ENCODE measurements at regions of chr18 and their contacts with region 1.

Region 1: GRCh38 chr18:63320046-63320689 is 599 bp upstream of the BCL2 start:
- DNase-seq: peak; percentile 93
- ATAC-seq: peak; percentile 81
- H3K4me3 Mint-ChIP-seq: peak overlapping the region; percentile 94
- H3K27ac Mint-ChIP-seq: peak overlapping the region; percentile 91
- H3K4me1 Mint-ChIP-seq: peaks cover 27% of the 10 kb centered on the region
- H3K27me3 Mint-ChIP-seq: no peaks in the 10 kb centered on the region

Region 2: GRCh38 chr18:62919109-62919838 is 400.9 kb before region 1 on chr18:
- CTCF ChIA-PET with region 1: no interaction called
- POLR2A ChIA-PET with region 1: no interaction called
- DNase-seq: no peak
- ATAC-seq: no peak
- H3K4me3 Mint-ChIP-seq: no peak overlapping the region
- H3K27ac Mint-ChIP-seq: no peak overlapping the region
- H3K4me1 Mint-ChIP-seq: no peaks in the 10 kb centered on the region
- H3K27me3 Mint-ChIP-seq: no peaks in the 10 kb centered on the region

Region 3: DNA sequence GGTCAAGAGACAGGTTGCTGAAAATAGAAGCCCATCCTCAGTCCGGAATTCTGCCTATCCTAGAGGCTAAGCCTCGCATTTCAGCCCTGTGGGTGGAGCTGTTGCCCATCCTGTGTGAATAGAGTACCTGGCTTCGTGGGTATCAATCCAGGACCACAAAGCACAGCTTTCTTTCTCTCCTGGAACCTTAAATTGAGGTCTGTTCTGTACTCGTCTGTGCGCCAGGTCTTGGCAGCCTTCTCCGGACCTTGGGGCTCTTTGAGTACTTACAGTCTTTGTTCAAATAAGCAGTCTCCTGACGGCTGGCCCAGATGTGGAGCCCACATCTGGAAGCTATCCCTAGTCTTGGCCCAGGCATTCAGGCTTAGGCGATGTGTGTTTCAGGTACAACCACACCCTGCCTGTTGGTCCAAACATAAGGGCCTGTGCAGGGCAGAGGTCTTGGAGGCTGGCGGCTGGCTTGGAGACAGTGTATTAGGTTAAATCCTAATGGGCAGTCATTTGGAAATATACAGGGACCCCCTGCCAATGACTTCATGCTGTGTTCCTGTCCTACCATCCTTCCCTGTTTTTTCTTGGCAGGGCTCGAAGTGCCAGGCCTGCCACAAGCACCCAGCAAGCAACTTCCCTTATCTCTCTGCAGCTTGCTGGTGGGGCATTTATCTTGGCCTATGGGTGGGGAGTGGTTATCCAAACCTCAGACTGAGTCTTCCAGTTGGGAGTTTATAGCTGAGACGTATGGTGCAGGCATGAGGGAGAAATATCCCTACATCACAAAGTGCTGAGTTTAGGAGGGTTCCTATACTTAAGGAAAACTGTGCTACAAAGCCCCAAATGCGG is 294.7 kb before region 1 on chr18:
- CTCF ChIA-PET with region 1: interaction called, 144 read pairs
- POLR2A ChIA-PET with region 1: no interaction called
- DNase-seq: no peak
- ATAC-seq: no peak
- H3K4me3 Mint-ChIP-seq: no peak overlapping the region
- H3K27ac Mint-ChIP-seq: no peak overlapping the region
- H3K4me1 Mint-ChIP-seq: no peaks in the 10 kb centered on the region
- H3K27me3 Mint-ChIP-seq: peaks cover 18% of the 10 kb centered on the region

Region 4: DNA sequence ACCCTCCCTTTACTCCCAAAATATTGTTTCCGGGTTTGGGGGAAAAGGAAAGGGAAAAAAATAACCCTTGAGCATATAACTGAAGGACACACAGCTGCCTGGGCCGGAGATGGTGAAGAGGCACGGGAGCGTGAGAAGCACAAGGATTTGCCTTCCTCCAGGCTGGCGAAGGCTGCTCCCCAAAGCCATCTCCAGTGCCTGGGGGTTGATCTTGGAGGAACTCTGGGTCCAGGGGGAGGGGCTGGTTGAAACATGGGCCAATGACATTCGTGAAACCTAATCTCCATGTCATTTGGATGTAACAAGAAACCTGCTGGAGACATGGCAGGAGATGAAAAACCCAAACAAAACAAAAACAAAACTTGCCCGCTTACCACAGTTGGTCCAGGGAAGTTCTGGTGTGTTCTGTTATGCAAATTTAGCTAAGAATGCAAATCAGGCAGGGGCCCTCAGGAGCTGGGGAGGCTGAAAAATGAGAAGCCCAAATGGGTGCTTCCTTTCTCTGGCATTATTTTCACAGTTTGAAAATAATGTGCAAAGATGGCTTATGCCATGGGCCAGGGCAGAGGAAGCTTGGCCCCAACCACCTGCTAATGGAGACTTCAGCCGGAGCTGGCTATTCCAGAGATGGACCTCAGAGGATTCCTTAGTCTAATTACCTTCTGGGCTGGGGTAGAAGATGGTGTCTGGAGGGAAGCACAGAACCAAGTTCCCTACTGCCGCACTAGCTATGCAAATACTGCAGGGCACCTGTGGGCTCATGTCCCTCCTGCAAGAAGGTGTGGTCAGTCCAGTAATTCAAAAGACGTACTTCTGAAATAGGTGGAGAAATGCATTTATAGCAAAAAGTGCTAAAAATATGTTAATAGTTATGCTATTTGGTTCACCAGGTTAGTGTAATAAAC is 181.5 kb before region 1 on chr18:
- CTCF ChIA-PET with region 1: interaction called, 25 read pairs
- POLR2A ChIA-PET with region 1: interaction called, 28 read pairs
- DNase-seq: no peak
- ATAC-seq: peak; percentile 54
- H3K4me3 Mint-ChIP-seq: peak overlapping the region; percentile 77
- H3K27ac Mint-ChIP-seq: peak overlapping the region; percentile 95
- H3K4me1 Mint-ChIP-seq: peaks cover 75% of the 10 kb centered on the region
- H3K27me3 Mint-ChIP-seq: no peaks in the 10 kb centered on the region

Region 5: GRCh38 chr18:63207143-63207790 is 112.9 kb before region 1 on chr18:
- CTCF ChIA-PET with region 1: interaction called, 54 read pairs
- POLR2A ChIA-PET with region 1: interaction called, 205 read pairs
- DNase-seq: peak; percentile 42
- ATAC-seq: peak; percentile 12
- H3K4me3 Mint-ChIP-seq: peak overlapping the region; percentile 82
- H3K27ac Mint-ChIP-seq: peak overlapping the region; percentile 88
- H3K4me1 Mint-ChIP-seq: peaks cover 90% of the 10 kb centered on the region
- H3K27me3 Mint-ChIP-seq: no peaks in the 10 kb centered on the region

Region 6: DNA sequence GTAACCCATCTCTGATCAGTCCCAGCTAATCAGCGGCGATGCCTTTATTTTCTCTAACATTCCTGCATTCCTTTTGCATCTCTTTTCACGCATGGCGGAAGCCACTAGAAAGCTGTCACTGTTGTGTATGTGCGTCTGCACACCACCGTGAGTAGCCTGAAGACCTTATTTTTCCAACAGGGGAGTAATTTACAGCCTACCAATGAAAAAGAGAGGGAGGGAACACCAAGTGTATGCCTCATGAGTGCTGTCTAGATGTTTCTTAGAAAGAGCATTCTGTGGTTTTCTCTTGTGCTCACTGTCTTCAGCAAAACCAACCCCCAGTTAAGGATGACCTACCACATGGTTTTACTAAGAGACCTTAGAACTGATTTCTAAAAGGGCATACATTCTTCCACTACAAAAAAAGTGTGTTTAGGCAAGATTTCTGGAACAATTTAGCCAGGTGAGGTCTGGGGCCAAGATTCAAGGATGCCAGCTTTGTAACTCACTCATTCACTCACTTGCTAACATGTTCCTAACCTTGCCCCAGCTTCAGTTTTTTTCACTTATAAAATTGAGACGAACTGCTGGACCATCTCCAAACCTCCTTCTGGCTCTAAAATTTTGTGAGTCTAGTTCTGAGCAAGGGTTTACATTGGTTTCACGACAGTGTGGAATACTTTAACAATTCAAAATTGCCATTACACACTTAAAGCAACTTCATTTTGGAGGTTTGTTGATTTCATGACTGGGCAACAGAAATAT is 52.0 kb before region 1 on chr18:
- CTCF ChIA-PET with region 1: interaction called, 43 read pairs
- POLR2A ChIA-PET with region 1: interaction called, 8 read pairs
- DNase-seq: peak; percentile 46
- ATAC-seq: peak; percentile 90
- H3K4me3 Mint-ChIP-seq: peak overlapping the region; percentile 60
- H3K27ac Mint-ChIP-seq: peak overlapping the region; percentile 64
- H3K4me1 Mint-ChIP-seq: peaks cover 79% of the 10 kb centered on the region
- H3K27me3 Mint-ChIP-seq: no peaks in the 10 kb centered on the region

Region 7: GRCh38 chr18:63339920-63340484 is 19.8 kb after region 1 on chr18:
- CTCF ChIA-PET with region 1: interaction called, 26 read pairs
- POLR2A ChIA-PET with region 1: no interaction called
- DNase-seq: peak; percentile 71
- ATAC-seq: peak; percentile 64
- H3K4me3 Mint-ChIP-seq: no peak overlapping the region
- H3K27ac Mint-ChIP-seq: no peak overlapping the region
- H3K4me1 Mint-ChIP-seq: peaks cover 3% of the 10 kb centered on the region
- H3K27me3 Mint-ChIP-seq: no peaks in the 10 kb centered on the region